Activated CD4-positive, alpha-beta T cell treated with anti-CD3 and anti-CD28 coated beads for 36 hours (primary cell): ENCODE measurements at regions of chr14 and their contacts with region 1.

Region 1: GRCh38 chr14:24595073-24595808 is 14.2 kb downstream of the GZMH start:
- DNase-seq: no peak
- ATAC-seq: no peak
- H3K4me3 Mint-ChIP-seq: no peak overlapping the region
- H3K27ac Mint-ChIP-seq: no peak overlapping the region
- H3K4me1 Mint-ChIP-seq: peaks cover 5% of the 10 kb centered on the region
- H3K27me3 Mint-ChIP-seq: peaks cover 9% of the 10 kb centered on the region

Region 2: GRCh38 chr14:24639905-24640304 is 44.7 kb after region 1 on chr14:
- CTCF ChIA-PET with region 1: no interaction called
- POLR2A ChIA-PET with region 1: no interaction called
- intact Hi-C with region 1: no loop called
- DNase-seq: no peak
- ATAC-seq: peak; percentile 74
- H3K4me3 Mint-ChIP-seq: no peak overlapping the region
- H3K27ac Mint-ChIP-seq: peak overlapping the region; percentile 51
- H3K4me1 Mint-ChIP-seq: peaks cover 26% of the 10 kb centered on the region
- H3K27me3 Mint-ChIP-seq: peaks cover 2% of the 10 kb centered on the region

Region 3: DNA sequence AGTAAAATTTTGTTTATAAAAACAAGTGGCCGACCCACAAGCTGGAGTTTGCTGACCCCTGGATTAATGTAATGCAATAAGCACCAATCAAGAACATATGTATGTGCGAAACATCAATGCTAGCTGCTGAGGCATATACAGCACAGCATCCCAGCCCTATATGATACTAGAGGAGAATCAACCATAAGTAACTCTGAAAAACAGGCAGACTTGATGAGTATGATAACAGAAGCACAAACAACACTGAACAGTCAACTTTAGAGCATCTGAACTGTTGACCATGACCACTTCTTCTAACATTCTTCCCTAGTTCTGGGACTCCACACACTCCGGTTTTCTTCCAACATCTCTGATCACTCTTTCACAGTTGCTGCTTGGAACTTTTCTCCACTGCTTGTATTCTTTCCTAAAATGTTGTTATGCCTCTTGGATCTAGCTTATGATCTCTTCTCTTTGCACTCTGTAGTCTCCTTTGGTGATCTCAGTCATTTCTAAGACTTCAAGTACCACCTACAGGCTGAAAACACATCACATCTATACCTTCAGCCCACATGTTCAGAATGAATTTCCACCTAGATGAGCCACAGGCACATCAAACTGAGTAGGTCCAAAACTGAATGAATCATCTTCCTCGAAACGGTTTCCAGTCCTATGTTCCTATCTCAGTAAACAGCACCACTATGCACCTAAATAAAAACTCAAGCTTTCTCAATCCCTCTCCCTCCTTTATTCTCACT is 397.6 kb after region 1 on chr14:
- CTCF ChIA-PET with region 1: no interaction called
- POLR2A ChIA-PET with region 1: no interaction called
- intact Hi-C with region 1: loop called in 1 of 2 experiments (anchors 10 kb)
- DNase-seq: no peak
- ATAC-seq: peak; percentile 76
- H3K4me3 Mint-ChIP-seq: no peak overlapping the region
- H3K27ac Mint-ChIP-seq: no peak overlapping the region
- H3K4me1 Mint-ChIP-seq: no peaks in the 10 kb centered on the region
- H3K27me3 Mint-ChIP-seq: no peaks in the 10 kb centered on the region